Endothelial cell of umbilical vein (primary cell): ENCODE measurements at regions of chr1 and their contacts with region 1.

Region 1: DNA sequence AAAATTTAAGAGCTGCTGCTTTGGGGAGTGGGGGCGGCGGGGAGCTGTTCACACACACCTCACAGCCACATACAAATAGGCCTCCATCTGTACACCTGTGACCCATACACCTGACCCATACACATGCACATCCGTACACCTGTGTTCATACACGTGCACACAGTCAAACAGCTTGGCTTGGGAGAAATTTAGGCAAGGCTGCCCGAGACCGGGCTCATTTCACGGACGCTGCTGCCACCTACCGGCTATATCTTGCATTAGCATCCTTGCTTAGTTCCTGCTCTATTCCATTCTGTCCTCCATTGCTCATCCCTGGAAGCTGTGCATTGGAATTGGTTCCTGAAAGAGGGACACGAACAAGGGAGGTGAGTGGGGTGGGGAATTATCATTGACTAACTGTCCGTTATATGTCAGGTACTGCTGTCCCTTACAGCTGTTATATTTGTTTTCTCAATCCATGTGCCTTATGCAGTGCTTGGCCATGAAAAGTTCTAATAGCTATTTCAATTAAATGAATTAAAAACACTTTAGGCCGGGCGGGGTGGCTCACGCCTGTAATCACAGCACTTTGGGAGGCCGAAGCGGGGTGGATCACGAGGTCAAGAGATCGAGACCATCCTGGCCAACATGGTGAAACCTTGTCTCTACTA is 37.1 kb upstream of the EPB41 start:
- DNase-seq: peak; percentile 73
- H3K4me3 ChIP-seq: no peak overlapping the region
- H3K27ac ChIP-seq: no peak overlapping the region
- H3K4me1 ChIP-seq: no peaks in the 10 kb centered on the region
- H3K27me3 ChIP-seq: no peaks in the 10 kb centered on the region
- CTCF ChIP-seq: peak; percentile 86 to 92
- POLR2A ChIP-seq: no peak

Region 2: GRCh38 chr1:28518000-28518744 is 359.1 kb before region 1 on chr1:
- CTCF ChIA-PET with region 1: interaction called, 15 read pairs
- POLR2A ChIA-PET with region 1: interaction called, 5 read pairs
- dilution Hi-C with region 1: no loop called
- intact Hi-C with region 1: loop called (anchors 1 kb)
- DNase-seq: peak; percentile 91
- H3K4me3 ChIP-seq: peak overlapping the region; percentile 52 to 73 (median 57)
- H3K27ac ChIP-seq: peak overlapping the region; percentile 46
- H3K4me1 ChIP-seq: peaks cover 14% of the 10 kb centered on the region
- H3K27me3 ChIP-seq: no peaks in the 10 kb centered on the region
- CTCF ChIP-seq: peak; percentile 94 to 98
- POLR2A ChIP-seq: peak; percentile 87

Region 3: GRCh38 chr1:28642847-28643635 is 234.2 kb before region 1 on chr1 and contains the start of gene TAF12:
- CTCF ChIA-PET with region 1: interaction called, 25 read pairs
- POLR2A ChIA-PET with region 1: interaction called, 3 read pairs
- dilution Hi-C with region 1: no loop called
- intact Hi-C with region 1: loop called (anchors 1 kb)
- DNase-seq: peak; percentile 98
- H3K4me3 ChIP-seq: peak within 1 kb of the TSS; percentile 70 to 89 (median 82)
- H3K27ac ChIP-seq: peak within 1 kb of the TSS; percentile 91
- H3K4me1 ChIP-seq: peaks cover 20% of the 10 kb centered on the region
- H3K27me3 ChIP-seq: no peaks in the 10 kb centered on the region
- CTCF ChIP-seq: peak in 1 of 2 donors; percentile 48
- POLR2A ChIP-seq: peak; percentile 100
- total RNA-seq, gene TAF12: 15.3 and 18.2 TPM in 2 replicates

Region 4: GRCh38 chr1:28775121-28775944 is 101.9 kb before region 1 on chr1:
- CTCF ChIA-PET with region 1: interaction called, 16 read pairs
- POLR2A ChIA-PET with region 1: interaction called, 3 read pairs
- dilution Hi-C with region 1: no loop called
- intact Hi-C with region 1: no loop called
- DNase-seq: peak; percentile 42
- H3K4me3 ChIP-seq: peak overlapping the region in 1 of 3 experiments; percentile 4
- H3K27ac ChIP-seq: no peak overlapping the region
- H3K4me1 ChIP-seq: no peaks in the 10 kb centered on the region
- H3K27me3 ChIP-seq: no peaks in the 10 kb centered on the region
- CTCF ChIP-seq: no peak
- POLR2A ChIP-seq: no peak

Region 5: GRCh38 chr1:28860332-28861073 is 16.8 kb before region 1 on chr1:
- CTCF ChIA-PET with region 1: interaction called, 23 read pairs
- POLR2A ChIA-PET with region 1: interaction called, 3 read pairs
- dilution Hi-C with region 1: no loop called
- intact Hi-C with region 1: no loop called
- DNase-seq: peak; percentile 36
- H3K4me3 ChIP-seq: no peak overlapping the region
- H3K27ac ChIP-seq: no peak overlapping the region
- H3K4me1 ChIP-seq: no peaks in the 10 kb centered on the region
- H3K27me3 ChIP-seq: peaks cover 0 to 3% of the 10 kb centered on the region in 2 experiments
- CTCF ChIP-seq: no peak
- POLR2A ChIP-seq: no peak

Region 6: DNA sequence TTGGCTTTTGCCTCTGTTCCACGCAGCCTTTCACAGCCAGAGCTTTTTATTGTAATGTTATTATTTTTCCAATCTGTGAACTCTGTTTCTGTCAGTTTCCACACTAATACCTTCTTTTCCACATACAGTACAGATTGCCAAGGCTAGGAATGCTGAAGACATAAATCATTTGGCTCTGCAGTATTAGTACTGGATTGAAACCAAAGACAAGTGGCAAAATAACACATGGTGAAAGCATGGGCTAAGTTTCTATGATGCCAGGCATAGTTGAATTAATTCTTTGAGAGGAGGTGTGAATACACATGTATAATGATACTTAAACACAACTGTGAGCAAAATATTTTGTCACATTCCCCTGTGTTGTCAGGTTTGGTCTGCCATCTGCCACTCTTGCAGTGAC is 172.9 kb after region 1 on chr1:
- CTCF ChIA-PET with region 1: interaction called, 10 read pairs
- POLR2A ChIA-PET with region 1: no interaction called
- dilution Hi-C with region 1: no loop called
- intact Hi-C with region 1: no loop called
- DNase-seq: peak; percentile 15
- H3K4me3 ChIP-seq: no peak overlapping the region
- H3K27ac ChIP-seq: no peak overlapping the region
- H3K4me1 ChIP-seq: no peaks in the 10 kb centered on the region
- H3K27me3 ChIP-seq: no peaks in the 10 kb centered on the region
- CTCF ChIP-seq: no peak
- POLR2A ChIP-seq: no peak

Region 7: DNA sequence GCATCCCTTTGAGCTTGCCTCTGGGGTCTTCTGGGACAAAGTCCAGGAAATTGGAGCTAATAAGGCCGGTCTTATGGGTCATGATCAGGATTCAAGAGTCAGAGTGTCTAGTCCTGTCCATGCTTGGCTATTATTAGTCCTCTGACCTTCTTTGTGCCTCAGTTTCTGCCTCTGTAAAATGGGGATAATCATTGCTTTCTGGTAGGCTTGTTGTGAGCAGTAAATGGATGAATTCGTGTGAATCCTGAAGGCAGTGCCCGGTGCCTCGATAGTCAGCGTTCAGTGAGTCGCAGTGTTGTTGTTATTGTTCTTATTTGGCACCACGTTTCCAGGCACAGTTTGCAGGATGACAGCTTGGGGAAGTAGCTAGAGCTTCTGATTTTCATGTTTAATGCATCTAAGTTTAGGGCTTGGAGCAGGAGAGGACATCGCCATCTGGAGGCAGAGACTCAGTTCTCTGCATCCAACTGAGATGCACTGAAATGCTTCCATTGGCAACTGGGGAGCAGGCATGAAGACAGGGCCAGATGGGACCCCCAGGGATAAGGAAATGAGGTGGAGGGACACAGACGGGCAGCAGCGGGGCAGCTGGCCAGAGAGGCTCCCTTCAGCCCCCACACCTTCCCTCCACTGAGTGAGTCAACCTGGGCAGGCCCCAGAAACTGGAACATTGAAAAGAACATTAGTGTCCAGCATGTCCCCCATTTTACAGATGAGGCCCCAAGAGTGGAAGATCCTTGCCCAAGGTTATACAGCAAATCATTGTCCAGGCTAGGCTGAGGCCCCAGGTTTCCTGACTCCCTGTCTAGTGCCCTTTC is 519.4 kb after region 1 on chr1:
- CTCF ChIA-PET with region 1: no interaction called
- POLR2A ChIA-PET with region 1: no interaction called
- dilution Hi-C with region 1: no loop called
- intact Hi-C with region 1: no loop called
- DNase-seq: no peak
- H3K4me3 ChIP-seq: no peak overlapping the region
- H3K27ac ChIP-seq: no peak overlapping the region
- H3K4me1 ChIP-seq: no peaks in the 10 kb centered on the region
- H3K27me3 ChIP-seq: no peaks in the 10 kb centered on the region
- CTCF ChIP-seq: peak in 1 of 2 donors; percentile 16
- POLR2A ChIP-seq: no peak